ENCODE measurements at regions of chr15 and their contacts with region 1.

Region 1: GRCh38 chr15:88467073-88467934 is at the starts of genes MRPL46 and MRPS11:
- DNase-seq: peak; percentile 91 to 92
- ATAC-seq: peak; percentile 89 to 97
- H3K4me3 ChIP-seq: peak within 1 kb of the TSS; percentile 73
- H3K27ac ChIP-seq: peak within 1 kb of the TSS; percentile 92 to 94
- H3K4me1 ChIP-seq: peaks cover 18% of the 10 kb centered on the region
- CTCF ChIP-seq: no peak
- EP300 ChIP-seq: no peak
- POLR2A ChIP-seq: peak; percentile 69
- RAD21 ChIP-seq: no peak
- polyA plus RNA-seq, gene MRPL46: 66.9 and 76.1 TPM in 2 replicates
- polyA plus RNA-seq, gene MRPS11: 99.0 and 102 TPM in 2 replicates

Region 2: DNA sequence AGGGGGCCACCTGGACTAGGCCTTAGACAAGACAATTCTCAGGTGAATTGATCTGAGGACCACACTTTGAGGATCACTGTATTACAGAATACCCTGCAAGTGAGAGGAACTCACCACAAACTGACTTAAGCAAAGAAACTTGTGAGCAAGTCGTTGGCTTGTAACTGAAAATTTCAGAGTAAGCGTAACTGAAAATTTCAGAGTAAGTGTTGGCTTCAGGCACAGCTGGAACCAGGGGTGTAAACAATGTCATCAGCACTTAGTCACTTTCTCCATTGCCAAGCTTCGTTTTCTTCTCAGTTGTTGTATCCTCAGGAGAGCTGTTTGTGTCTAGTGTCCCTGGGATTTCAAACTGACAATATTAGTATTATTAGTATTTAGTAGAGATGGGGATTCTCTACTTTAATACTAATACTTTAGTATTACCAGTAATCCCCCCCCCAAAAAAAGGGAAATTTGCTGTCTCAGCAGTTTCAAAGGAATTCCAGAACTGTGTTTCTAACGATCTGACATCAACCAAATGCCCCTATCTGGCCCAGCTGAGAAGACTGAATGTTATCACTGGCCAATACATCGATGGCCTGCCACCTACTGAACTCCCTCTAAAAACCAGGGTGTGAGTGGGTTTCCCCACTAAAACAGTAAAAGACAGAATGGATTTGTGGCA is 685.2 kb before region 1 on chr15:
- CTCF ChIA-PET with region 1: no interaction called
- POLR2A ChIA-PET with region 1: no interaction called
- DNase-seq: no peak
- ATAC-seq: no peak
- H3K4me3 ChIP-seq: no peak overlapping the region
- H3K27ac ChIP-seq: no peak overlapping the region
- H3K4me1 ChIP-seq: no peaks in the 10 kb centered on the region
- CTCF ChIP-seq: no peak
- EP300 ChIP-seq: no peak
- POLR2A ChIP-seq: no peak
- RAD21 ChIP-seq: no peak

Region 3: DNA sequence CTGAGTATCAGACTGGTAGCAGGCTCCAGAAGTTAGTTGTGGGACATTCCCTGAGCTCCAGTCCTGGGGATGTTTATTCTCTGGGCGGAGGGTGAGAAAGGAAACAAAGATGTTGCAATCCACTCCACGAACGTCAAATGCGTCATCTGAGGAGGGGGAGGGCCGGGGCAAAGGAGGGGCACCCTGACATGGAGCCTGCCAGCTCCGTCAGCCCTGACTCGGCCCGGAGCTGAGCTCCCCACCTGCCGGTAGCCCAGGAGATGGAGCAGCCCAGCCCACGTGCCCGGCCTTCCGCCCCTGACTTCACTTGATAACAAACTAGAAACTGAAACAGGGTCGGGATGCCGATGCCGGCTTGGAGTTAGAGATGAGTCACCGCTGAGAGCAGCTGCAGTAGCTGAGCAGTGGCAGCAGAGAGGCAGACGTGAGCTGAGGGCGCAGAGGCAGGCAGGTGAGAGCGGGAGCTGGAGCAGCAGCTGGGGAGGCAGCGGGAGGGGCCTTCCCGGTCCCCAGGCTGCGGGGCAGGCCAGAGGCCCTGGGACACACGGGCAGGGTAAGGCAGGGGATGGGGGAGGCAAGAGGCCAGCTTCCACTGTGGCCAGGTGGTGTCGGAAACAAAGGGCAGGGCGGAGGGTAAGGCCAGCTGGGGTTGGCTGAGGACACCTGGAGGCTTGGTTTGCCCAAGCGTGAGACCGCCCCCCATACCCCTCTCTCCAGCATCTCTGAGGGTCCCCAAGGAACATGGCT is 171.5 kb after region 1 on chr15 and contains the start of gene ISG20:
- CTCF ChIA-PET with region 1: no interaction called
- POLR2A ChIA-PET with region 1: interaction called, 17 read pairs
- DNase-seq: peak; percentile 98 to 100
- ATAC-seq: peak; percentile 80 to 92
- H3K4me3 ChIP-seq: peak within 1 kb of the TSS; percentile 31
- H3K27ac ChIP-seq: peak within 1 kb of the TSS; percentile 87 to 92
- H3K4me1 ChIP-seq: peaks cover 55% of the 10 kb centered on the region
- CTCF ChIP-seq: peak; percentile 44
- EP300 ChIP-seq: peak; percentile 61 to 83; a peak in 3 of 5 replicates
- POLR2A ChIP-seq: no peak
- RAD21 ChIP-seq: peak; percentile 10 to 51; a peak in 4 of 5 replicates
- polyA plus RNA-seq, gene ISG20: 47.4 and 65.8 TPM in 2 replicates

Measured in A549 (cell line).